Activated CD8-positive, alpha-beta memory T cell treated with anti-CD3 and anti-CD28 coated beads, Interleukin-2, amount 10 ng/mL, durations not matched to agents 7 days and 5 days (primary cell): ENCODE measurements at regions of chr1 and their contacts with region 1.

Region 1: GRCh38 chr1:155277070-155277895 is at the start of gene HCN3:
- DNase-seq: peak; percentile 96
- ATAC-seq: peak; percentile 70
- H3K4me3 Mint-ChIP-seq: peak within 1 kb of the TSS; percentile 68
- H3K27ac Mint-ChIP-seq: peak within 1 kb of the TSS; percentile 49
- H3K4me1 Mint-ChIP-seq: peaks cover 36% of the 10 kb centered on the region
- H3K27me3 Mint-ChIP-seq: no peaks in the 10 kb centered on the region
- total RNA-seq, gene HCN3: 5.4 to 6.1 TPM

Region 2: GRCh38 chr1:155308493-155309422 is 31.5 kb after region 1 on chr1 and contains the start of gene FDPS:
- CTCF ChIA-PET with region 1: interaction called, 20 read pairs
- DNase-seq: peak; percentile 99
- ATAC-seq: peak; percentile 99
- H3K4me3 Mint-ChIP-seq: peak within 1 kb of the TSS; percentile 97
- H3K27ac Mint-ChIP-seq: peak within 1 kb of the TSS; percentile 96
- H3K4me1 Mint-ChIP-seq: peaks cover 42% of the 10 kb centered on the region
- H3K27me3 Mint-ChIP-seq: no peaks in the 10 kb centered on the region
- total RNA-seq, gene FDPS: 329 to 406 TPM